Gastrocnemius medialis (tissue), 4 donors: ENCODE measurements at regions of chr1 and their contacts with region 1.

Region 1: DNA sequence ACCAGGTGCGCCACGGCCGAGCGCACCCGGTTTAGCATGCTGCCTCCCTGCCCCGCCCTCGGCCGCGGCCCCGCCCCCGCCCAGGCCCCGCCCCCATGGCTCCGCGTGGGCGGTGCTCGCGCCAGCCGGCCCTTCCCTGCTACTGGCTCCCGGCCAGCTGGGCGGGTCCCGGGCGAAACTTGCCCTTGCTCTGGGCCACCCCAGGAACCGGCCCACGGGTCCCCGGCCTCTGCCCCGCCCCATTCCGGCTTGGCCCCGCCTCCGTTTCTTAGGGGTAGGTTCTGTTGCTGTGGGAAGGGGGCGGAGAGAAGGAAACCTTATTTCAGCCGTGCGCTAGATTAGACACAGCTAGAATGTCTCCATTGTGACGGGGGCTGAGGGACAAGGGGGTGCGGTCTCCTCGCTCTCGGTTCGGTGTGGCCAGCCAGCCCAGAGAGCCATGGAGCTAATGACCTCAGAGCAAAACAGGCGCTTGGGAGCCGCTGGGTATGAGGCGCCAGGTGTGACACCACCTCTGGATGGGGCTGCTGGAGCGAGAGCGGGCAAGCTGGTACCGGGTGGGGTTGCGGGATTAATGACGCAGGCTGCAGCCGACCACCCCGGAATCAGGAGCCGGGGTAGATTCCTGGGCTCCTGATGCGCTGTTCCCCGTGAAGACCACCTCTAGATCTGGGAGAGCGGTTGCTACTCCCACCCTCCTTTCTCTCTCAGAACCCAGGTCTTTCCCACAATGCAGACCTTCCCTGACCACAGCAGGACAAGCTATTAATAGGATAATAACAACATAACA is at the start of gene PPM1J:
- DNase-seq: peak; percentile 93 to 96
- ATAC-seq: peak; percentile 59 to 78
- H3K4me3 ChIP-seq: peak within 1 kb of the TSS; percentile 75 to 96 (median 82)
- H3K27ac ChIP-seq: peak within 1 kb of the TSS; percentile 84 to 93 (median 92)
- H3K4me1 ChIP-seq: peaks cover 20 to 22% of the 10 kb centered on the region in 2 donors
- H3K27me3 ChIP-seq: peaks cover 0 to 6% (median 0%) of the 10 kb centered on the region in 3 donors
- CTCF ChIP-seq: no peak
- POLR2A ChIP-seq: peak in 1 of 2 donors; percentile 69
- total RNA-seq, gene PPM1J: 4.2 to 5.4 (median 4.8) TPM

Region 2: GRCh38 chr1:112508278-112509004 is 207.0 kb before region 1 on chr1 and contains the start of gene WNT2B:
- in situ Hi-C with region 1: no loop called
- intact Hi-C with region 1: no loop called
- DNase-seq: no peak
- ATAC-seq: no peak
- H3K4me3 ChIP-seq: peak within 1 kb of the TSS; percentile 45 to 54 (median 50)
- H3K27ac ChIP-seq: no peak within 1 kb of the TSS
- H3K4me1 ChIP-seq: peaks cover 0 to 9% of the 10 kb centered on the region in 2 donors
- H3K27me3 ChIP-seq: peaks cover 33 to 49% (median 40%) of the 10 kb centered on the region in 3 donors
- CTCF ChIP-seq: no peak
- POLR2A ChIP-seq: no peak
- total RNA-seq, gene WNT2B: 0.03 to 1.5 (median 0.41) TPM

Region 3: DNA sequence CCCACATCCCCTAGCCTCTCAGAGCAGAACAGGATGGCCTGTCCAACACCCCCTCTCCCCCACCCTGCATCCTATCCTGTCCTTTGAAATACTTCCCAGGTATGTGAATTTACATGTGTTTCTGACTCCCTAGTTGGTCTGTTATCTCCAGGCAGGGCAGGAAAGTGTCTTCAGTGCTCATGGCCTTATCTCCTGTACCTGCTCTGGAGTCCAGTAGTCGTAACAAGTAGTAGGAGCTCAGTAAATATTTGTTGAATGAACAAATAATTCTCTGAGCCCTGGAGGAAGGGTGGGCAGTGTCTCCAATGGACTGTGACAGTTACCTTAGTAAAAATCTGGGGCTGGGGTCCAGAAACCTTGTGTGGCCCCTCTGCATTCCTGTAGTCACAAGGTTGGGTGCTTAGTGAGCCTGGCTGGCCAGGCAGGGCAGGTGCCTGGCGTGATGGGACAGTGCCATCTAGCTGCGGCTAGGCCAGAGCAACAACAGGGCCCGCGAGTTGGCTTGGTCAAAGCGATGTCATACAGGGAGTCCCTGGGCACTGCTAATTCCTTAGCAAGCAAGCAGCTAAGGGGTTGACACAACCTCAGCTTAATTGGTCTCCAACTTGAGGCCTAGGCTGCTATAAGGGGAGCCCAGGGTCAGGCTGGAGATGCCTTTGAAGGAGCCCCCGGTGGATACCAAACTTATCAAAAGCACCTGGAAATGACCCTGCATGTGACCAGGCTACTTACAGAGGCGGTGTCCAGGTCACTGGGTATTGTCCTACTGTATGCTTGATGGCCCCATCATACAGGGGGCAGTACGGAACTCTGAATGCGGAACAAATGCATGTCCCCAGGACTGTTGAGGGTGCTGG is 88.7 kb after region 1 on chr1:
- in situ Hi-C with region 1: loop called (anchors 5 kb)
- intact Hi-C with region 1: loop called (anchors 1 kb)
- DNase-seq: peak; percentile 52 to 63
- ATAC-seq: peak; percentile 50 to 65
- H3K4me3 ChIP-seq: no peak overlapping the region
- H3K27ac ChIP-seq: no peak overlapping the region
- H3K4me1 ChIP-seq: peaks cover 12 to 19% of the 10 kb centered on the region in 2 donors
- H3K27me3 ChIP-seq: no peaks in the 10 kb centered on the region
- CTCF ChIP-seq: peak; percentile 64 to 84 (median 79)
- POLR2A ChIP-seq: no peak

Region 4: GRCh38 chr1:112882271-112882744 is 166.8 kb after region 1 on chr1:
- in situ Hi-C with region 1: no loop called
- intact Hi-C with region 1: loop called (anchors 5 kb)
- DNase-seq: peak in 1 of 2 donors; percentile 18
- ATAC-seq: no peak
- H3K4me3 ChIP-seq: no peak overlapping the region
- H3K27ac ChIP-seq: no peak overlapping the region
- H3K4me1 ChIP-seq: no peaks in the 10 kb centered on the region
- H3K27me3 ChIP-seq: no peaks in the 10 kb centered on the region
- CTCF ChIP-seq: no peak
- POLR2A ChIP-seq: no peak

Region 5: GRCh38 chr1:113042285-113043143 is 327.1 kb after region 1 on chr1:
- in situ Hi-C with region 1: loop called in 1 of 4 experiments (anchors 5 kb)
- intact Hi-C with region 1: loop called (anchors 1 kb)
- DNase-seq: peak; percentile 42 to 66
- ATAC-seq: peak; percentile 90 to 92
- H3K4me3 ChIP-seq: no peak overlapping the region
- H3K27ac ChIP-seq: no peak overlapping the region
- H3K4me1 ChIP-seq: peaks cover 0 to 7% of the 10 kb centered on the region in 2 donors
- H3K27me3 ChIP-seq: no peaks in the 10 kb centered on the region
- CTCF ChIP-seq: peak; percentile 67 to 78 (median 73)
- POLR2A ChIP-seq: no peak

Region 6: GRCh38 chr1:113072757-113073478 is 357.5 kb after region 1 on chr1 and contains the start of gene LRIG2:
- in situ Hi-C with region 1: loop called in 1 of 4 experiments (anchors 10 kb)
- intact Hi-C with region 1: loop called (anchors 2 kb)
- DNase-seq: peak; percentile 97 to 99
- ATAC-seq: peak; percentile 96 to 99
- H3K4me3 ChIP-seq: peak within 1 kb of the TSS; percentile 69 to 89 (median 79)
- H3K27ac ChIP-seq: peak within 1 kb of the TSS; percentile 87 to 94 (median 91)
- H3K4me1 ChIP-seq: peaks cover 8 to 30% of the 10 kb centered on the region in 2 donors
- H3K27me3 ChIP-seq: no peaks in the 10 kb centered on the region
- CTCF ChIP-seq: peak; percentile 82 to 93 (median 85)
- POLR2A ChIP-seq: peak; percentile 89
- total RNA-seq, gene LRIG2: 4.8 to 9.0 (median 8.9) TPM